ENCODE measurements at regions of chr11 and their contacts with region 1.

Region 1: DNA sequence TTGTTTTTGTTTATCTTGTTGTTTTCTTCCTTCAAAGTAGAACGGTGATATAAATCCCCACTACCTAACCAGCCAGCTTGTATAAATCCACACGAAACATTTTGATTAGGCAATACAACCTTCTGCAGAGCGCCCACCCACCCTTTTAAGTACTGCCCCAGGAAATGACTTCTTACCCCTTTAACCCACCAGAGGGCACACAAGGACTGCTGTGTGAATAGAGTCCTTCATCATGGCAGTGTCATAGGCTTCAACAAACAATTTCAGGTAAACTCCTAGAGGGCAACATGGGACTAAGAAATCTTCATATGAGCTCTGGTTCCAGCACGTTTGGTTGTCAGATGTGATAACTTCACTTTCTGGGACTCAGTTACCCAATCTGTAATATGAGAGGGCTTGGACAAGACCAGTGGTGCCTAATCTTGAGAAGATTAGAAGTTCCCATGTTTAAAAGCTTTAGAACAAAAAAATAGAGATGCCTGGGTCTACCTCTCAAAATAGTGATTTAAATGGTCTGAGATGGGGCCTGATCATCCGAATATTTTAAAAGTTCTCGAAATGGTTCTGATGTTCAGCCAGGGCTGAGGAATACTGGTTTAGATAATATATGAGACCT is 56.1 kb downstream of the PIWIL4 start:
- DNase-seq: peak; percentile 89 to 95 (median 94)
- H3K4me3 ChIP-seq: no peak overlapping the region
- H3K27ac ChIP-seq: no peak overlapping the region
- H3K4me1 ChIP-seq: peaks cover 0 to 7% (median 0%) of the 10 kb centered on the region in 4 experiments
- H3K27me3 ChIP-seq: no peaks in the 10 kb centered on the region

Region 2: DNA sequence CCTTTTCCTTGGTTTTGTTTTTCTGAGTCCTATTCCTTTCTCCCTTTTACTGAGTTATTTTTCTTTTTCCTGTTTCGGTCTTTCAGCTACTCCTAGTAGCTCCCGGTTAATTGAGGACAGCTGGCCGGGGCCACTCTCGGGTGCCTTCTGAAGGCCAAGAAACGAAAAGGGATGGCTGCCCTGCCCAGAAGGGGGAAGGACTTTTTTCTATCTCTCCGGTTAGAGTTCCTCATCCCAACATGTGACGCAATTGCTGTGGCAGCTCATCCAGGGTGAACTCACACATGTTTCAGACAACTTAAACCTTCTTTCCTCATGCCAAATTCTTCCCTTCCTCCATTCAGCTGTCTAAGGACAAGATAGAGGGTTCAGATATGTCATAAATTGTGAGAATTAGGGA is 27.5 kb after region 1 on chr11:
- CTCF ChIA-PET with region 1: interaction called, 12 read pairs
- POLR2A ChIA-PET with region 1: no interaction called
- DNase-seq: no peak
- H3K4me3 ChIP-seq: no peak overlapping the region
- H3K27ac ChIP-seq: no peak overlapping the region
- H3K4me1 ChIP-seq: peaks cover 0 to 6% (median 3%) of the 10 kb centered on the region in 4 experiments
- H3K27me3 ChIP-seq: no peaks in the 10 kb centered on the region

Region 3: DNA sequence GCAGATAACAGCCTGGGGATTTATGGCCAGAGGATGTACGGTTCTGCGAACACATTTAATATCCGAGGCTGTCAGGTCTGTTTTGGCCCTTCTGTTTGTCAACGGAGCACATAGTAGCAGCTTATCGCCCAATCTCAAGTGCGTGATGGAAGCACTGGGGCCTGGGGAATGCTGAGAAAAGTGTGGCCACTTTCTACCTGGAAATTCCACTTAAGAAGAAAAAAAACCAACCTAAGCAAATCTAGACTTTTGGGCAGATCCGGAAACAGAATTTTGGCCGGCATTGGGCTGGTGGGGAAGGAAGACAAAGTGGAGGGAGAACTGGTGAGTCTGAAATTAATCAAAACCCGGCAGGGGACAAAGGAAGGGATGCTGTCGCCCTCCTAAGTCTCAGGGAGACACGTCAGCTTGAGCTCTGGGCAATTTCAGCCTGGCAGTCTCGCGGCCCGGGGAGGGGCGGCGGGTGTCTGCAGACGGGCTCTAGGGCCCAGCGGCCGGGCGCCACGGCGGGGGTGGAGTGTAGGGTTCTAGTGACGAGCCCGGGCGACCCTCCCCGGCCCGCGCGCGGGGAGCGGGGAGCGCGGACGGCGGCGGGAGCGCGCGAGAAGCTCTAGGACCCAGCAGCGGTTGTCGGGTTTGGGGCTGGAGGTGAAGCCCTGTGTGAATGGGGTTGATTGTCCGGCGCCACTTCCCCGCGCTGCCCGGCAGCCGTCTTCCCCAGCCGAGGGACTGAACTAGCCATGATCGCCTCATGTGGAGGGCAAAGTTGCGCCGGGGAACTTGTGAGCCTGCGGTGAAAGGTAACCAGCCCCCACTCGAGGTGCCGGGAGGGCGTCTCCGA is 144.8 kb after region 1 on chr11 and contains the start of gene AMOTL1:
- CTCF ChIA-PET with region 1: interaction called, 84 read pairs
- POLR2A ChIA-PET with region 1: no interaction called
- DNase-seq: peak; percentile 89 to 97 (median 94)
- H3K4me3 ChIP-seq: peak within 1 kb of the TSS; percentile 70 to 96 (median 82)
- H3K27ac ChIP-seq: peak within 1 kb of the TSS; percentile 55 to 72
- H3K4me1 ChIP-seq: peaks cover 0 to 20% (median 12%) of the 10 kb centered on the region in 4 experiments
- H3K27me3 ChIP-seq: no peaks in the 10 kb centered on the region

Region 4: DNA sequence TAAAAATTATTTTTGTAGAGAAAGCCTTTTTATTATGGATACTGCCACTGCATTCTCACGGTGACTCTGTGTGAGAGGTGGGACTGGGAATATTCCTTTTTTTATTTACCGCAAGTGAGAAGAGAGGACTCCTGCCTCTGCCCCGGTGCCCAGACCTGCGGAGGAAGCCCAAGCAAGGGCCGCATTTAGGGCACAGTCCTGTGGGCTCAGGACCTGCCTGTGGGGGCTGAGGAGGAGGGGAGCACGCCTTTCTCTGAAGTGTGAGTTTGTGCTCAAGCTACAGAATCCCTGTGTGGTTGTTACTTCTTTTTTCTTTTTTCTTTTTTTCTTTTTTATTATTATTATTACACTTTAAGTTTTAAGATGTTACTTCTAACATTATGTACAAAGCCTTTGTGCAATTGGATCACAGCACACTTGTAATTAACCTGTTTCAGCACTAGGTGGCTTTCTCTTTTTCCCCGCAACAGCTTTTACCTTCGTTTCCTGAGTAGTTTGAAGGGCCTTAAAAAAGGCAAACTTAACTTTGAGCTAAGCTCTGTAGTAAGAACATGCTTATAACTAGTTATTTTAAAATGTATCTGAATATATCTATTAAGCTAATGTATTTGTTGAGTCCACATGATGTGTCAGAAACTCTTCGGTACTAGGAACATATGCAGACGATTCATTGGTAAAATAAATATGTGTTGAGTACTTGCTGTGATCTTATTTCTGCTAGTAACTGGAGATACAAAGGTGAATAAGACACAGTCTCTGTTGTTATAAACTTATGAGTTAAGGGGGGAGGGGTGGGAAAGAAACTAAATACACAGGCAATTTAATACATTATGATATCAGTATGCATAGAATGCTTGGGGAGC is 163.3 kb after region 1 on chr11:
- CTCF ChIA-PET with region 1: interaction called, 13 read pairs
- POLR2A ChIA-PET with region 1: no interaction called
- DNase-seq: peak; percentile 52 to 77 (median 72)
- H3K4me3 ChIP-seq: no peak overlapping the region
- H3K27ac ChIP-seq: no peak overlapping the region
- H3K4me1 ChIP-seq: peaks cover 0 to 11% (median 0%) of the 10 kb centered on the region in 4 experiments
- H3K27me3 ChIP-seq: no peaks in the 10 kb centered on the region

Region 5: GRCh38 chr11:94897330-94897768 is 274.1 kb after region 1 on chr11:
- CTCF ChIA-PET with region 1: interaction called, 43 read pairs
- POLR2A ChIA-PET with region 1: no interaction called
- DNase-seq: peak; percentile 34 to 62 (median 58)
- H3K4me3 ChIP-seq: no peak overlapping the region
- H3K27ac ChIP-seq: no peak overlapping the region
- H3K4me1 ChIP-seq: no peaks in the 10 kb centered on the region
- H3K27me3 ChIP-seq: no peaks in the 10 kb centered on the region